GM13976 (cell line): ENCODE measurements at regions of chr3 and their contacts with region 1.

Region 1: DNA sequence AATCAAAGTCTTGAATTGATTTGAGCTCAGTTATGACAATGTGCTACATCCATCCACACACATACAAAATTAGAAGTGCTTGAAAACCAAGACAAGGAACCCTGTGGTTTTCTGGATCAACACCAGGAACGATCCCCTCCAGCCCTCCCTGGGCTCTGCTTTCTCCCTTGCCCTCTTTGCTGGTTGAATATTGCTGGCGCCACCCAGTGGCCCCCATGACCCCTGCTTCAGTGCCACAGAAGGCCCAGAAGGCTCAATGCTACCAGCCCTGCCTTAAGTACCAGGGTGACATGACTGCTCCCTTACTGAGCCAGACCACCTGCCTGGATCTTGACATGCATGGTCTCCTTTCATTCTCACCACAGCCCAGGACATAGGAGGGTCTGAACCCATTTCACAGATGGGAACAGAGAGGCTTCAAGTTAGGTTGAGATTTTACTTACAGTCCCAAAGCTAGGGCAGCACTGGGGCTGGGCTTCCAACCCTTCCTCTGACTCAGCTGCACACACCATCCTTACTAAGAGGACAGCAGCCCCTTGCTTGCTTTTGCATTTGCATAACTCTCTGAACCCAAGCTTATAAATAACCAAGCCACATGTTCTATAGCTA is 15.0 kb downstream of the IL12A start:
- DNase-seq: peak; percentile 55
- CTCF ChIP-seq: peak; percentile 87

Region 2: DNA sequence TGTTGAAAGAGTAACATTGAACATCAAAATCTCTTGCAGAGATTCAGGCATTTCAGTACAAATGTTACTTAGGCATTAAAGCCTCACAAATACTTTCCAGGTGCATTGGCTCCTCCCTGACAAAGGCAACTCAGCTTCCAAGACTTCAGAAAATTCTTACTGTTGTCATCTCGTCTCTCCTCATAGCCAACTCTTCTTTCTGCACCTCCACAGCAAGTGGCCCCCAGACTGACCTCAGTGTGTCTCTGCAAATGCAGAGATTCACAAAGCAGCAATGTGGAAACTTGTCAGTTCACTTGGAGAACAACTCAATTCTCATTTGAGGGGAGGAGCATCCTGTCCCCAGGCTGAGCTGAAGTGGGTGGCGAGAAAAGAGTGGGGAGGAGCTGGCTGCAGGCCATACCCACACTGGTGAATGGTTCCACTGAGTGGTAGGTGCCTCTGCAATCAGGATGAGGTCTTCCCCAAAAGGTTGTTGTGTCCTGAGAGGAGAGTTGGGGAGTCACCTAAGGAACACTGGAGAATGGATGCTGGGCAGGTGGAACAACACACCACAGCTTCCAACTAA is 263.7 kb before region 1 on chr3:
- in situ Hi-C with region 1: no loop called
- DNase-seq: no peak
- CTCF ChIP-seq: no peak

Region 3: GRCh38 chr3:159884661-159885402 is 118.8 kb before region 1 on chr3:
- in situ Hi-C with region 1: loop called (anchors 5 kb)
- DNase-seq: peak; percentile 57
- CTCF ChIP-seq: peak; percentile 29

Region 4: GRCh38 chr3:160707187-160707794 is 703.7 kb after region 1 on chr3:
- in situ Hi-C with region 1: no loop called
- DNase-seq: peak; percentile 27
- CTCF ChIP-seq: peak; percentile 31